ENCODE measurements at regions of chr11 and their contacts with region 1.

Region 1: GRCh38 chr11:61899146-61899841 is 7.9 kb upstream of the FADS3 start:
- DNase-seq: peak; percentile 88 to 98 (median 93)
- ATAC-seq: peak; percentile 98
- H3K4me3 ChIP-seq: no peak overlapping the region
- H3K4me3 Mint-ChIP-seq: no peak overlapping the region
- H3K27ac ChIP-seq: no peak overlapping the region
- H3K27ac Mint-ChIP-seq: peak overlapping the region; percentile 55 to 93 (median 69)
- H3K4me1 ChIP-seq: peaks cover 4% of the 10 kb centered on the region in 2 donors
- H3K4me1 Mint-ChIP-seq: peaks cover 4 to 7% (median 5%) of the 10 kb centered on the region in 7 donors
- H3K27me3 ChIP-seq: no peaks in the 10 kb centered on the region
- H3K27me3 Mint-ChIP-seq: peaks cover 0 to 4% (median 0%) of the 10 kb centered on the region in 5 donors

Region 2: DNA sequence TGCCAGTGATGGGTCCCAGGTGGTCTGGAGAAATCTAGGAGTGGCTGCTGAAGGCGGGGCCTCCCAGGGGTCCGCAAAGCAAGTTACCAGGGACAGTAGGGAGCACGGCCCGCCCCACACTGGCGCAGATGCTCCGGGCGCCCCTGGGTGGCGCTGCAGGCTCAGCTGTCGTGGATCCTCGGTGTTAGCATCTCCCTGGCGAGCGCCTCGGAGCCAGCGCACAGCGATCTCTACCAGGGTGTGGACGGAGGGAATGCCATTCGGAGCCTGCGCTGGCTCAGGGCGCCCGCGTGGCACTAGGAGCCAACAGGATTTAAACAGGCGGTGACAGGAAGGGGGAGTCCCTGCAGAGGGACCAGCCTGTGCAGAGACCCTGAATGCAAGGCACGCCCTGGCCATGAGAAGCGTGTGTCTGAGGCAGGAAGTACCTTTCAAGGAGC is 28.1 kb before region 1 on chr11:
- CTCF ChIA-PET with region 1: no interaction called
- POLR2A ChIA-PET with region 1: no interaction called
- intact Hi-C with region 1: loop called in 1 of 2 experiments (anchors 1 kb)
- DNase-seq: peak; percentile 23 to 77 (median 50)
- ATAC-seq: peak; percentile 94
- H3K4me3 ChIP-seq: no peak overlapping the region
- H3K4me3 Mint-ChIP-seq: peak overlapping the region; percentile 34 to 87 (median 70)
- H3K27ac ChIP-seq: no peak overlapping the region
- H3K27ac Mint-ChIP-seq: peak overlapping the region in 3 of 9 donors; percentile 43 to 52 (median 46)
- H3K4me1 ChIP-seq: no peaks in the 10 kb centered on the region
- H3K4me1 Mint-ChIP-seq: peaks cover 0 to 8% (median 5%) of the 10 kb centered on the region in 7 donors
- H3K27me3 ChIP-seq: no peaks in the 10 kb centered on the region
- H3K27me3 Mint-ChIP-seq: peaks cover 0 to 8% (median 0%) of the 10 kb centered on the region in 5 donors

Region 3: GRCh38 chr11:62054484-62055121 is 155.3 kb after region 1 on chr11:
- CTCF ChIA-PET with region 1: no interaction called
- POLR2A ChIA-PET with region 1: no interaction called
- intact Hi-C with region 1: loop called (anchors 1 kb)
- DNase-seq: peak in 7 of 9 donors; percentile 5 to 47 (median 21)
- ATAC-seq: no peak
- H3K4me3 ChIP-seq: no peak overlapping the region
- H3K4me3 Mint-ChIP-seq: no peak overlapping the region
- H3K27ac ChIP-seq: no peak overlapping the region
- H3K27ac Mint-ChIP-seq: no peak overlapping the region
- H3K4me1 ChIP-seq: no peaks in the 10 kb centered on the region
- H3K4me1 Mint-ChIP-seq: no peaks in the 10 kb centered on the region
- H3K27me3 ChIP-seq: no peaks in the 10 kb centered on the region
- H3K27me3 Mint-ChIP-seq: peaks cover 0 to 24% (median 0%) of the 10 kb centered on the region in 5 donors